MCF 10A (cell line): ENCODE measurements at regions of chr6 and their contacts with region 1.

Region 1: GRCh38 chr6:94636780-94637385 is 940.5 kb upstream of the MANEA start:
- DNase-seq: peak; percentile 16
- H3K4me3 Mint-ChIP-seq: no peak overlapping the region
- H3K27ac Mint-ChIP-seq: no peak overlapping the region
- H3K4me1 Mint-ChIP-seq: no peaks in the 10 kb centered on the region
- H3K27me3 Mint-ChIP-seq: peaks cover 83% of the 10 kb centered on the region
- CTCF ChIP-seq: peak; percentile 23

Region 2: DNA sequence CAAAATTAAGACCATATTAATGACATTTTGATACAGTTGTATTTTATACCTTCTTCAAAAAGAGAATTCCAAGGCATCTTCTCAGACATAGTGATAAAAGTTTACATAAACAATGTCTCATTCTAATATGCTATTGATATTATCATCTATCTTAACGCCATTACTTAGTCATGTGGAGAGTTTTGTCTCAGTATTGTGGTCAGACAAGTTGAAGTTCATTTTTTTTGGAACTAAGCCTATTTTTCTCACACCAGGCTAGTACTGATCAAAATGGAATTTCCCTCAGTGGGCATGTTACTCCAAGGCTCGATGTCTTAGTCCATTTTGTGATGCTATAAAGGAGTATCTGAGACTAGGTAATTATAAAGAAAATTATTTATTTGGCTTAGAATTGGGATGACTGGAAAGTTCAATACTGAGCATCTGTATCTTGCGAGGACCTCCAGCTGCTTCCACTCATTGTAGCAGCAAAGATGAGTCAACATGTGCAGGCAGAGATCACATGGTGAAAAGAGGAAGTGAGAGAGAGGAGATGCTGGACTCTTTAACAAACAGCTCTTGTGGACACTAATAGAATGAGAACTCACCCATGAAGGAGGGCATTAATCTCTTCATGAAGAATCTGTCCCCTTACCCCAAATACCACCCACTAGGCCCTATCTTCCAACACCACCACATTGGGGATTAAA is 114.9 kb after region 1 on chr6:
- CTCF ChIA-PET with region 1: no interaction called
- POLR2A ChIA-PET with region 1: no interaction called
- intact Hi-C with region 1: no loop called
- DNase-seq: no peak
- H3K4me3 Mint-ChIP-seq: no peak overlapping the region
- H3K27ac Mint-ChIP-seq: no peak overlapping the region
- H3K4me1 Mint-ChIP-seq: no peaks in the 10 kb centered on the region
- H3K27me3 Mint-ChIP-seq: peaks cover 19% of the 10 kb centered on the region
- CTCF ChIP-seq: no peak

Region 3: DNA sequence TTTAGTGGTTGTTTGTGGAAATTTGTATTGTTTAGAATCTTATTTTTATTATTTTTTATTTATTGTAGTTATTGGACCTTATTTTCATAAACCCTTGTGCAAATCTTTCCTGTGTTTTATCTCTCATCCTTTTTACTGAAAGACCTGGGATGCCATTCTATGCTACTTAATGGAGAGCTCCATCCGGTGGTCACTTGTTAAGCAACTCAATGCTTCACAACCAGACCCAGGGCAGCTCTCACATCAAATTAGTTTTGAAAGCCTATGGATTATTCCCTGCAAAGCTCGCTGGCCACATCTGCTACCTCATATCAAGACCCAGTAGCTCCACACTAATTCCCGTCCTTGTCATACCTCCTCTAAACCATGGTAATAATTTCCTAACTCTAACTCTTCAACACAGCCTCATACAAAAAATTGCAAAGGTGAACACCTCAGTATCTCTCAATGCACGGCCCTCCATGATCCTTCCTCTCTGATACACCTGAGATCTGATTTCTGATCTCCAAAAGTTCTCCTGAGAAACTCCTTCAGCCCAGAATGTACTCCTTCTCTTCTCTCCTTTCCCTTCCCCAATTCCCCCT is 643.9 kb after region 1 on chr6:
- CTCF ChIA-PET with region 1: no interaction called
- POLR2A ChIA-PET with region 1: no interaction called
- intact Hi-C with region 1: loop called (anchors 5 kb)
- DNase-seq: peak; percentile 26
- H3K4me3 Mint-ChIP-seq: no peak overlapping the region
- H3K27ac Mint-ChIP-seq: no peak overlapping the region
- H3K4me1 Mint-ChIP-seq: no peaks in the 10 kb centered on the region
- H3K27me3 Mint-ChIP-seq: peaks cover 73% of the 10 kb centered on the region
- CTCF ChIP-seq: no peak

Region 4: DNA sequence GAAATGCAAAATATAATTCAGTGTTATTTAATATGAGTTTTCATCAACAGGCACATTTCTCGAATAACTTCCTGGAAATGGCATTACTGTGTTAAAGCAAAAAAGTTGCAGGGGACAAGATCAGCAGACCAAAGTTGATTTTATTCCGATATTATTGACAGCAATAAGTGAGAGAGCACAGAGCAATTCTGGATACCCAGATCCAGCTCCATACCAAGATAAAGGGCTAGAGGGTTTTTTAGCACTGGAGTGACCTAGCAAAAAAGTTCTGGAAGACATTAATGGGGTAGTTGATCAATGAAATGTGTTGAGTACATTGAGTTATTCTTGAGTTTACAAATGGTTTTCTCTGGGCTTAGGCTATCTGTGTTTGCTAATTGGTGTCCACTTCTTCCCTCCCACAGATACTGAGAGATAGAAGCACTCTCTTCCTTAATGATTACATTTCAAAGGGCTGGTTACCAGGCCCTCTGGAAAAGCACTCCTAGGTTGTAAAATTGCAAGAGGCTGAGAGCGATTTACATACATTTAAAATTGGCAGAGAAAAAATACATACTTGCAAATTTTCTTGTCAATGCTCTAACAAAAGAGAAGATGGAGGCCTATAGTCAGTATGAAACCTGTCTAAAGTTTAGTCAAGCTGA is 893.4 kb after region 1 on chr6:
- CTCF ChIA-PET with region 1: no interaction called
- POLR2A ChIA-PET with region 1: no interaction called
- intact Hi-C with region 1: no loop called
- DNase-seq: no peak
- H3K4me3 Mint-ChIP-seq: no peak overlapping the region
- H3K27ac Mint-ChIP-seq: no peak overlapping the region
- H3K4me1 Mint-ChIP-seq: no peaks in the 10 kb centered on the region
- H3K27me3 Mint-ChIP-seq: peaks cover 21% of the 10 kb centered on the region
- CTCF ChIP-seq: no peak